Natural killer cell (primary cell): ENCODE measurements at regions of chr2 and their contacts with region 1.

Region 1: DNA sequence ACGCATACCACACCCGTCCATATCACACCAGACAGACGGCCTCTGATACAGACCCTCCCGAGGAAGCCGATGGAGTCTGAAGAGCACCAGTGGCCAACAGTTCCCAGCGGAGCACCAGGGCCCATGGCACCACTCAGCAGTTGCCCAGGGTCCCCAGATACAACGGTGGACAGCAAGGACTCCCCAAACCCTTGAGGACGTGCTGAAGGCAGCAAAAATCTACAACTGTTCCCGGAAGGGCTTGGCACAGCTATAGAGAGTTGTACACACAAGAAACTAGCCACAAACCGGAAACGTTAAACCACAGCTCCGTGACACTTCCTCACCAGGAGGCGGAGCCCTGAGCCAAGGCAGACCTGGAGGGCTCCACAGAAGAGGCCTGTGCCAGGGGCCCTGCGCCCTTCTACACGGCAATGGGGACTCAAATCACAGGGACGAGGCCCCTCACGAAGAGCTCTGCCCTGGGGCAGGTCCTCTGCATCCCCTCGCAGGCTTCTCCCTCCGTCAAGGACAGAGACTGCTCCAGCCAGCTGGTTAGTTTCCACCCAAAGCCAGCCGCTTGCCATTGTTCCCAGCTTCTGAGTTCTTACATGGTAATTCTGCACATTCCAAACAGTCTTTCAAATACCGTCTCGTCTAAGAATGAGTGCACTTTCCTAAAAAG is 133.4 kb downstream of the HDAC4 start:
- DNase-seq: peak; percentile 87 to 98
- ATAC-seq: peak; percentile 80 to 93 (median 89)
- H3K4me3 ChIP-seq: peak overlapping the region; percentile 81
- H3K4me3 Mint-ChIP-seq: peak overlapping the region; percentile 98
- H3K27ac ChIP-seq: peak overlapping the region; percentile 91
- H3K27ac Mint-ChIP-seq: peak overlapping the region; percentile 99
- H3K4me1 ChIP-seq: peaks cover 77% of the 10 kb centered on the region
- H3K4me1 Mint-ChIP-seq: peaks cover 75 to 78% of the 10 kb centered on the region in 2 donors
- H3K27me3 ChIP-seq: no peaks in the 10 kb centered on the region
- H3K27me3 Mint-ChIP-seq: no peaks in the 10 kb centered on the region
- CTCF ChIP-seq: peak; percentile 29

Region 2: GRCh38 chr2:239151201-239152131 is 116.0 kb before region 1 on chr2:
- intact Hi-C with region 1: loop called (anchors 5 kb)
- DNase-seq: no peak
- ATAC-seq: peak in 1 of 3 donors; percentile 14
- H3K4me3 ChIP-seq: no peak overlapping the region
- H3K4me3 Mint-ChIP-seq: no peak overlapping the region
- H3K27ac ChIP-seq: peak overlapping the region; percentile 72
- H3K27ac Mint-ChIP-seq: peak overlapping the region; percentile 39 to 74
- H3K4me1 ChIP-seq: peaks cover 16% of the 10 kb centered on the region
- H3K4me1 Mint-ChIP-seq: peaks cover 30 to 41% of the 10 kb centered on the region in 2 donors
- H3K27me3 ChIP-seq: no peaks in the 10 kb centered on the region
- H3K27me3 Mint-ChIP-seq: no peaks in the 10 kb centered on the region
- CTCF ChIP-seq: no peak

Region 3: DNA sequence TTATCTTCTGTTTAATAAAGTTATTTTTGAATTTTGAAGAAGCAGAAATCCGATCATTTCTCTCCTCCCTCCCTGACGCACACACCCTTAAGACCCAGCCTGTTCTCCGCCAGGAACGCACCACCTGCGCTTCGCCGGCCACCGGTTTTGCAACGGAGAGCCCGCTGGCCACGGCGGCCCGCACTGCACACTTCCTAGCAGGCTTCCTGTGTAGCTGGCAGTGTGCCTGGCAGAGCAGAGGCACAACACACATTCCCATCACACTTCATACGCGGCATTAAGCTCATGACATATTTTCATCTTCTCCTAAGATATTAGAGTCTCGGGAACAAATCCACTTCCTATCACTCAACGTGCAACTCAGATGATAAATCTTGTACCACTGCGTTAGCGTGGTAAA is 14.6 kb before region 1 on chr2:
- intact Hi-C with region 1: no loop called
- DNase-seq: peak in 1 of 2 donors; percentile 44
- ATAC-seq: peak; percentile 47 to 60 (median 53)
- H3K4me3 ChIP-seq: no peak overlapping the region
- H3K4me3 Mint-ChIP-seq: peak overlapping the region; percentile 30
- H3K27ac ChIP-seq: no peak overlapping the region
- H3K27ac Mint-ChIP-seq: peak overlapping the region; percentile 16 to 84
- H3K4me1 ChIP-seq: peaks cover 20% of the 10 kb centered on the region
- H3K4me1 Mint-ChIP-seq: peaks cover 51 to 57% of the 10 kb centered on the region in 2 donors
- H3K27me3 ChIP-seq: no peaks in the 10 kb centered on the region
- H3K27me3 Mint-ChIP-seq: no peaks in the 10 kb centered on the region
- CTCF ChIP-seq: no peak

Region 4: DNA sequence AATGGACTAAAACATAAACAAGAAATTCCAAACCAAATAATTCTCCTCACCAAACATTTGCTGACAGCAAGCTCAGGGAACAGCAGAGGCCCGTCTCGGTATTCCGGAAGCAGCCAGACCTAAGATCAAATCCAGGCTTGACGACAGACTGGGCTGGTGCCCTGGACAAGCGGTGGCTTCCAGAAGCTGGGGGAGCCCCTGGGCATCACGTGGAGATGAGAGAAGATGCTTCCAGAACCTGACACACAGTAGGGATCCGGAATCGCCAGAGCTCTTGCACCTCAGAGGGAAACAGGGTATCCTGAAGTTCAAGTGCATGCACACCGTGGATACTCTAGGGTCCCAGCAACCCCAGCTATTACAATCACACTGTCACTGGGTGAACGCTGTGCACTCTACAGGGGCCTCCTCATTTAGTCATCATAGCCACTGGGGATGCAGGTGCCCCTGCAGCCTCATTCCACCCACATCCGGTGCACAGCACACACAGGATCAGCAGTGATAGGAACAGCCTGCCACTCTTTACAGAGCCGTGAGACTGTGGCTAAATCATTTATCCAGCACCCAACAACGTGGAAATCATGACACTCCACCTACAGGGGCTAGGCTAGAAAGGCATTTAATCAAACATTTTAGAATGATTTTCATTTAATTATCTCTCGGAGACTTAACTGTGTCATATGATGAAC is 30.8 kb after region 1 on chr2:
- intact Hi-C with region 1: loop called (anchors 1 kb)
- DNase-seq: peak in 1 of 2 donors; percentile 89
- ATAC-seq: peak; percentile 78 to 80 (median 79)
- H3K4me3 ChIP-seq: no peak overlapping the region
- H3K4me3 Mint-ChIP-seq: peak overlapping the region; percentile 70
- H3K27ac ChIP-seq: no peak overlapping the region
- H3K27ac Mint-ChIP-seq: peak overlapping the region; percentile 76 to 77
- H3K4me1 ChIP-seq: peaks cover 49% of the 10 kb centered on the region
- H3K4me1 Mint-ChIP-seq: peaks cover 46 to 57% of the 10 kb centered on the region in 2 donors
- H3K27me3 ChIP-seq: no peaks in the 10 kb centered on the region
- H3K27me3 Mint-ChIP-seq: no peaks in the 10 kb centered on the region
- CTCF ChIP-seq: no peak

Region 5: GRCh38 chr2:239361311-239361642 is 93.9 kb after region 1 on chr2:
- intact Hi-C with region 1: loop called (anchors 2 kb)
- DNase-seq: no peak
- ATAC-seq: no peak
- H3K4me3 ChIP-seq: no peak overlapping the region
- H3K4me3 Mint-ChIP-seq: no peak overlapping the region
- H3K27ac ChIP-seq: no peak overlapping the region
- H3K27ac Mint-ChIP-seq: peak overlapping the region in 1 of 2 donors; percentile 54
- H3K4me1 ChIP-seq: peaks cover 15% of the 10 kb centered on the region
- H3K4me1 Mint-ChIP-seq: peaks cover 37 to 54% of the 10 kb centered on the region in 2 donors
- H3K27me3 ChIP-seq: no peaks in the 10 kb centered on the region
- H3K27me3 Mint-ChIP-seq: peaks cover 0 to 11% of the 10 kb centered on the region in 2 donors
- CTCF ChIP-seq: no peak

Region 6: GRCh38 chr2:239401067-239401880 is 133.9 kb after region 1 on chr2:
- intact Hi-C with region 1: loop called (anchors 1 kb)
- DNase-seq: peak; percentile 99
- ATAC-seq: peak; percentile 86 to 96 (median 86)
- H3K4me3 ChIP-seq: peak overlapping the region; percentile 73
- H3K4me3 Mint-ChIP-seq: peak overlapping the region; percentile 96
- H3K27ac ChIP-seq: peak overlapping the region; percentile 95
- H3K27ac Mint-ChIP-seq: peak overlapping the region; percentile 98
- H3K4me1 ChIP-seq: peaks cover 18% of the 10 kb centered on the region
- H3K4me1 Mint-ChIP-seq: peaks cover 21 to 44% of the 10 kb centered on the region in 2 donors
- H3K27me3 ChIP-seq: no peaks in the 10 kb centered on the region
- H3K27me3 Mint-ChIP-seq: peaks cover 0 to 4% of the 10 kb centered on the region in 2 donors
- CTCF ChIP-seq: no peak

Region 7: DNA sequence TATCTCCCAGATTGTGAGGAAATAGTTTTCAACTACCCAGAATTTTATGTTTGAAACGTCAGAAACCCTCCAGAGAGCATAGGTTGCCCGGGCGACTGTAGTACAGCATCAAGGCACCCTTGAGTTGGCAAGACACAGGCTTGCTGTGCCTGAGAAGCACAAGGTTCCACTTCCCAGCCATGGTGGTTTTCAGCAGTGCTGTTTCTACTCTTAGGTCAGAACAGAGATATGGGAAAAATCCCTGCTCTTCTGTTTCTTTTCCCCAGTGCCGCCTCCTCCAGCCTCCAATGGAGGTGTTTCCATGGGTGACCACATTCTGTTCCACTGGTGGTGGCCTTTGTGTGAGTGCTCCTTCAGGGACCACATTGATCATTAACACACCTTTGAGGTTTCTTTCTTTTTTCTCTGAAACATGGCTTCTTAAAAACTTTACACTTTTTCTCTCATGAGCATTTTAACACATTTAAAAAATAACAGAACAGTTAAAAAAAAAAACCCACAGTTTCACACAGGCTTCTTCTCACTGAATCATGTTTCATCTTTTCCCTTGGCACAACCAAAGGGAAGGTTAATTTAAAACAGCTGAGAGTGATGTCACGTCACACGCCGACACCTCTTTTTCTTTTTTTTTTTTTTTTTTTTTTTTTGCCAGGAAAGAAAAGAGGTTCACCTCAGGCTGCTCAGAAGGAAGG is 362.7 kb after region 1 on chr2:
- intact Hi-C with region 1: loop called (anchors 10 kb)
- DNase-seq: peak in 1 of 2 donors; percentile 58
- ATAC-seq: peak in 1 of 3 donors; percentile 25
- H3K4me3 ChIP-seq: no peak overlapping the region
- H3K4me3 Mint-ChIP-seq: peak overlapping the region; percentile 32
- H3K27ac ChIP-seq: no peak overlapping the region
- H3K27ac Mint-ChIP-seq: no peak overlapping the region
- H3K4me1 ChIP-seq: peaks cover 52% of the 10 kb centered on the region
- H3K4me1 Mint-ChIP-seq: peaks cover 36 to 44% of the 10 kb centered on the region in 2 donors
- H3K27me3 ChIP-seq: no peaks in the 10 kb centered on the region
- H3K27me3 Mint-ChIP-seq: peaks cover 0 to 4% of the 10 kb centered on the region in 2 donors
- CTCF ChIP-seq: no peak